ENCODE measurements at regions of chr2 and their contacts with region 1.

Region 1: DNA sequence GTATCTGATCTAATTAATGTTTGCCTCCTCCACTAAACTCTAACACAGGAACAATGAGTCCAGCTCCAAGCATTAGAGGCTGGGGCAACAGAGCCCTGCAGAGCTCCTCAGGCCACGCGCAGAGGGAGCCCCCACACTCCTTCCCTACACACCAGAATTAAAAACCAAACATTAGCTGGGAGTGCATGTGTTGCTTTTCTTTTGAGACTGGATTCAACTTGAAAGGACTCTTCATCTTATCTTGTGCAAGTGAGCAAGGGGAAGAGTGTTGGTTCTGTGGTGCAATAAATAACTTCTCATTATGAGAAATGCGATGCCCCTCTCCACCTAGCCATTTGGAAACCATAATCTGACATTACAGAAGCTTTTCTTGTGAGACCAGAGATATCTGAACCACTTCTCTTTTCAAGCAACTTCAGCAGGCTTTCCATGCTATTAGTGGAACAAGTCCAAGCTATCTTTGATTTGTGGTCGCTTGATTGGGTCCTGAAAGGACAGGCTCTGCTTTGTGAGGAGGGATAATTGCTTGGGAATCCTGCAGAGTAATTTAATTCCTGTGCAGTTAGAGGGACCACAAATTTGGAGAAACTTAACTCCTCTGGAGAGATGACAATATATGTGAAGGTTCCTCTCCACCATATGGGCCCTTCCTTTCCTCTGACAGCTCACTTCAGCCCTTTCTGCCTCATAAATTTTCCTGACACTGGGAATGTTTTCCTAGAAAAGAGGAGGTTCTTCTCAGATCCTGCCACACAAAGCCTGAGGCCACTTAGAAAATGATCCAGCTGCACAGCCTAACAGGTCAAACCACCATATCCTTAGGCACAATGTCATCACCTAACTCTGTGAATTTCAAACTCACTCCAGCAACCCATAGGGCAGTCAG is 112.4 kb downstream of the ATL2 start:
- DNase-seq: no peak
- H3K4me3 ChIP-seq: no peak overlapping the region
- H3K27ac ChIP-seq: no peak overlapping the region
- H3K27me3 ChIP-seq: no peaks in the 10 kb centered on the region
- CTCF ChIP-seq: no peak

Region 2: GRCh38 chr2:38076606-38077430 is 187.8 kb before region 1 on chr2:
- intact Hi-C with region 1: loop called (anchors 10 kb)
- DNase-seq: peak in 4 of 10 donors; percentile 34 to 62 (median 45)
- H3K4me3 ChIP-seq: peak overlapping the region; percentile 28 to 69 (median 57)
- H3K27ac ChIP-seq: peak overlapping the region in 46 of 59 donors; percentile 4 to 84 (median 58)
- H3K27me3 ChIP-seq: peaks cover 0 to 65% (median 36%) of the 10 kb centered on the region in 45 donors
- CTCF ChIP-seq: peak in 21 of 56 donors; percentile 6 to 38 (median 23)

Measured in dorsolateral prefrontal cortex (tissue), 120 donors.